Activated CD4-positive, alpha-beta T cell treated with anti-CD3 and anti-CD28 coated beads for 36 hours (primary cell): ENCODE measurements at regions of chr15 and their contacts with region 1.

Region 1: DNA sequence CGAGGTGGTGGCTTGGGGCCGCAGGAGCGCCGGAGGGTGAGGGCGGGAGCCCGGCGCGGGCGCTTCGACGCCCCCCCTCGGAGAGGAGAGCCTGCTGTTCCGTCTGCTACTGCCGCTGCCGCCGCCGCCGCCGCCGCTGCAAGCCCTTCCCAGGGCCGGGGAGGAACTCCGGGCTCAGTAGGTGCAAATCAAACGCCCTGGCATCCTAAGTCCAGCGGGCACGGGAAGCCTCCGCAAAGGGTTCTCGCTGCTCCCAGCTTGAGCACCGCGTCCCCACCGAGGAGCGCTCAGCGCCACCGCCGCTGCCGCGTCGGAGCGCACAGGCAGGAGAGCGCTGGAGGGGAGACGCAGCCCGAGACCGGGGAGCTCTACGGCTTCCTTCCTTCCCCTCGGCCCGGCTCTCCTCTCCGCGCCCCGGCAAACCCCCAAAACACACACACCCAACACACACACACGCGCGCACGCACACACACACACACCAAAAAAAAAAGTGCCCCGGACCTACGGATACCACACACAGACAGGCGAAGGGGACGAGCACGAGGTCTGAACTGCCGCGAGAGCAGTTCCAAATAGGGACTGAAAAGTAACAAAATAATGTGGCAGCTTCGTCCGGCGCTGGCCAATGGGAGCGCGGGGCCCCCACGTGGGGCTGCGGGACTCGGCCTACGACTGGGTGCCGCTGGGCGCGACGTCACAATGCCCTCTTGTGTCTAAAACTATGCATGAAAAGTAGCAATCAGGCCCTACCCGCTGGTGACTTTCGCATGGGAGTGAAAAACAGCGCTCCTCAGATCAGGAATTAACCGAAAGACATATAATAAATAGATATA is at the start of gene TLE3:
- DNase-seq: peak; percentile 99
- ATAC-seq: peak; percentile 68
- H3K4me3 Mint-ChIP-seq: peak within 1 kb of the TSS; percentile 93
- H3K27ac Mint-ChIP-seq: peak within 1 kb of the TSS; percentile 95
- H3K4me1 Mint-ChIP-seq: peaks cover 41% of the 10 kb centered on the region
- H3K27me3 Mint-ChIP-seq: peaks cover 5% of the 10 kb centered on the region
- total RNA-seq, gene TLE3: 89.2 to 97.6 TPM

Region 2: GRCh38 chr15:69160141-69160993 is 937.2 kb before region 1 on chr15 and contains the start of gene GLCE:
- CTCF ChIA-PET with region 1: no interaction called
- POLR2A ChIA-PET with region 1: no interaction called
- intact Hi-C with region 1: loop called in 1 of 2 experiments (anchors 5 kb)
- DNase-seq: peak; percentile 96
- ATAC-seq: peak; percentile 98
- H3K4me3 Mint-ChIP-seq: peak within 1 kb of the TSS; percentile 90
- H3K27ac Mint-ChIP-seq: peak within 1 kb of the TSS; percentile 84
- H3K4me1 Mint-ChIP-seq: peaks cover 16% of the 10 kb centered on the region
- H3K27me3 Mint-ChIP-seq: no peaks in the 10 kb centered on the region
- total RNA-seq, gene GLCE: 3.6 to 4.2 TPM

Region 3: GRCh38 chr15:69468241-69469121 is 629.1 kb before region 1 on chr15:
- CTCF ChIA-PET with region 1: no interaction called
- POLR2A ChIA-PET with region 1: interaction called, 6 read pairs
- intact Hi-C with region 1: loop called (anchors 2 to 5 kb)
- DNase-seq: peak; percentile 91
- ATAC-seq: peak; percentile 94
- H3K4me3 Mint-ChIP-seq: peak overlapping the region; percentile 59
- H3K27ac Mint-ChIP-seq: peak overlapping the region; percentile 85
- H3K4me1 Mint-ChIP-seq: peaks cover 27% of the 10 kb centered on the region
- H3K27me3 Mint-ChIP-seq: no peaks in the 10 kb centered on the region

Region 4: GRCh38 chr15:69755551-69756310 is 341.8 kb before region 1 on chr15:
- CTCF ChIA-PET with region 1: interaction called, 8 read pairs
- POLR2A ChIA-PET with region 1: interaction called, 13 read pairs
- intact Hi-C with region 1: loop called (anchors 1 to 2 kb)
- DNase-seq: peak; percentile 91
- ATAC-seq: peak; percentile 67
- H3K4me3 Mint-ChIP-seq: peak overlapping the region; percentile 40
- H3K27ac Mint-ChIP-seq: peak overlapping the region; percentile 93
- H3K4me1 Mint-ChIP-seq: peaks cover 94% of the 10 kb centered on the region
- H3K27me3 Mint-ChIP-seq: peaks cover 9% of the 10 kb centered on the region

Region 5: GRCh38 chr15:70299931-70300869 is 202.6 kb after region 1 on chr15:
- CTCF ChIA-PET with region 1: no interaction called
- POLR2A ChIA-PET with region 1: interaction called, 3 read pairs
- intact Hi-C with region 1: loop called in 1 of 2 experiments (anchors 1 kb)
- DNase-seq: peak; percentile 89
- ATAC-seq: peak; percentile 100
- H3K4me3 Mint-ChIP-seq: no peak overlapping the region
- H3K27ac Mint-ChIP-seq: no peak overlapping the region
- H3K4me1 Mint-ChIP-seq: peaks cover 11% of the 10 kb centered on the region
- H3K27me3 Mint-ChIP-seq: no peaks in the 10 kb centered on the region

Region 6: DNA sequence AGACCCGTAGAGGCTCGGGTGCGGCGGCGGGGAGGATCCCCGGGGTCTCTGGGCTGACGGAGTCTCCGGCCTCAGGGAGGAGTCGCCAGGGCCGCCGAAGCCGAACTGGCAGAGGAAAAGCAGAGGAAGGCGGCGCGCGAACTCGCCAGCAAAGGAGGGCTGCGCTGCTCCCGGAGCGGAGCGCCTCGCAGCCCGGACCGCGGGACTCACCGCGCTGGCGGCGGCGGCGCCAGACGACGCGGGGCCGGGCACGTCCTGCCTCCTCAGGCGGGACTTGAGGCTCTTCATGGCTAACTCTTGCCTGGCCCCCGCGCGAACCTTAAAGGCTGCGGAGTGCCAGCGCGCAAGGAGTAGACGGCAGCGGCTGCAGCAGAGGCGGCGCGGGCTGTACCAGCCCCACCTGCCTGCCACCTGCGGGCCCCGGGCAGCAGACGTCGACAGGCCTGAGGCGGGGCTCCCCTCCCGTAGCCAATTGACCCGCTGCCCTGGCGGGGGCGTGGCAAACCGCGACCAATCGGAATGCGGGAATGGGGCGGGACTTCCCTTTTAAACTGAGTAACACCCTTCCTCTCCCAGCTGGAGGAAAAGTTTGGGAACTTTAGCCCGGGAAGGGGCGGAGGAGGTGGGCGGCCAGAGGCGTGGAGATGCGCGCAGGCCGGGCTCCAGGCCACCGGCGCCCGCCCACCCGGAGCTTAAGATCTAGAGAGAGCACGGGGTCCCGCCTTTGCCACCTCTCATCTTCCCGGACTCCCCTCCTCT is 665.7 kb after region 1 on chr15 and contains the start of gene UACA:
- CTCF ChIA-PET with region 1: no interaction called
- POLR2A ChIA-PET with region 1: interaction called, 3 read pairs
- intact Hi-C with region 1: loop called in 1 of 2 experiments (anchors 5 kb)
- DNase-seq: peak; percentile 91
- ATAC-seq: peak; percentile 98
- H3K4me3 Mint-ChIP-seq: peak within 1 kb of the TSS; percentile 77
- H3K27ac Mint-ChIP-seq: peak within 1 kb of the TSS; percentile 45
- H3K4me1 Mint-ChIP-seq: peaks cover 19% of the 10 kb centered on the region
- H3K27me3 Mint-ChIP-seq: peaks cover 27% of the 10 kb centered on the region
- total RNA-seq, gene UACA: 6.6 TPM